CD4-positive, alpha-beta T cell (primary cell): ENCODE measurements at regions of chr10 and their contacts with region 1.

Region 1: DNA sequence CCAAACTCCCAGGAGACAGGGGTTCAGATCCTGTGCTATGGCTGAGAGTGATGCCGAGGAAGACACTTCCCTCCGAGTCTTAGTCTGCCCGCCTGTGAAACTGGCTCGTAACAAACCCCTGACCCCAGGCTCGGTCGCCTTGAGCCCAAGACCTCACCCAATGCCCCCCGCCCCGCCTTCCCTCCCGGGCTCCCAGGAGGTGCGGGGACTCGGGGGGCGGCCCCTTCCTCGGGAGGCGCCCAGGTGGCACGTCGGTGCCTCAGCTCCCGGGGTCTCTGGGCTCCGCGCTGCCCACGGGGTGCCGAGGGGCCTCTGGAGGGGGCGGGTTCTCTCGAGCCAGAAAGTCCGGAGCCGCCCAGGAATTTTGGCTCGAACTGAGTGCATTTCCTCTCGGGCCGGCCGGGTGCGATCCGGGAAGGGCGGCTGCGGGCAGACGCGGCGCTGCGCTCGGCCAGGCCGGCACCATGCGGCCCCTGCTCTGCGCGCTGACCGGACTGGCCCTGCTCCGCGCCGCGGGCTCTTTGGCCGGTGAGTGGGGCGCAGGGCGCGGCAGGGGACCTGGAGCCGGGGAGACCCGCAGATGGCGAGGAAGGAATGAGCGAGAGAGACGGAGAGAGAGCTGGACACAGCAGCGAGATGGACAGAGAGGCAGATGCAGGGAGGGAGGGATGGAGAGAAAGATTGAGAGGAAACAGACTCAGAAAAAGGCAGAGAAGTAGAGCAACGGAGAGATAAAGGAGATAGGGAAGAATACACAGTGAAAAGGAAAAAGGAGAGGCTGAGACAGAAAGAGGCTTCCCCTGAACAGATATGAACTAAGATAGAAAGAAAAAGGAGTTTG is at the start of gene PLAC9:
- DNase-seq: no peak
- ATAC-seq: no peak
- H3K4me3 ChIP-seq: no peak within 1 kb of the TSS
- H3K4me3 Mint-ChIP-seq: no peak within 1 kb of the TSS
- H3K27ac ChIP-seq: no peak within 1 kb of the TSS
- H3K27ac Mint-ChIP-seq: no peak within 1 kb of the TSS
- H3K4me1 ChIP-seq: peaks cover 7% of the 10 kb centered on the region
- H3K4me1 Mint-ChIP-seq: no peaks in the 10 kb centered on the region
- H3K27me3 ChIP-seq: peaks cover 9 to 41% of the 10 kb centered on the region in 2 experiments
- H3K27me3 Mint-ChIP-seq: peaks cover 47% of the 10 kb centered on the region
- CTCF ChIP-seq: no peak
- total RNA-seq, gene PLAC9: not detected

Region 2: DNA sequence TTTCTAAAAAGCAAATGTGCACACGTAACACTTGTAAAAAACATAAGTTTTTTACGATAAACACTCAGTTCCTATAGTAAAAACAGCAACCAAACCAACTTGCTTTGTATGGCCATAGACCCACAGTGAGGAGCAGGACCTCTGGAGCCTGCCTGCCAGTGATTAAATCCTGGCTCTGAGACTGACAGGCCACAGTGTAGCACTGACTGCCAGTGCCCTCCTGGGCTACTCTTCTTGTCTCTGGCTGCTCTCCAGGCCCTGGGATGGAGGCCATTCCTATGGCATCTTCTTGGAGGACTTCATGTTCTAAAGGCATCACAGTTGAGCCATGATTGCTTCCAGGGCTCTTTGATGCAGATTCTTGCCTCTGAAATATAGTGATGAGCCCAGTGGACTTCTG is 76.8 kb before region 1 on chr10:
- CTCF ChIA-PET with region 1: interaction called, 5 read pairs
- POLR2A ChIA-PET with region 1: no interaction called
- intact Hi-C with region 1: loop called in 1 of 2 experiments (anchors 5 kb)
- DNase-seq: no peak
- ATAC-seq: no peak
- H3K4me3 ChIP-seq: no peak overlapping the region
- H3K4me3 Mint-ChIP-seq: no peak overlapping the region
- H3K27ac ChIP-seq: no peak overlapping the region
- H3K27ac Mint-ChIP-seq: no peak overlapping the region
- H3K4me1 ChIP-seq: no peaks in the 10 kb centered on the region
- H3K4me1 Mint-ChIP-seq: no peaks in the 10 kb centered on the region
- H3K27me3 ChIP-seq: no peaks in the 10 kb centered on the region
- H3K27me3 Mint-ChIP-seq: no peaks in the 10 kb centered on the region
- CTCF ChIP-seq: no peak